ENCODE measurements at regions of chr2 and their contacts with region 1.

Region 1: GRCh38 chr2:199581935-199582360 is 124.2 kb upstream of the SATB2 start:
- DNase-seq: no peak
- ATAC-seq: peak; percentile 74
- H3K4me3 Mint-ChIP-seq: peak overlapping the region; percentile 59
- H3K27ac Mint-ChIP-seq: peak overlapping the region; percentile 38
- H3K4me1 Mint-ChIP-seq: peaks cover 29% of the 10 kb centered on the region
- H3K27me3 Mint-ChIP-seq: no peaks in the 10 kb centered on the region
- CTCF ChIP-seq: no peak

Region 2: GRCh38 chr2:199596549-199596948 is 14.6 kb after region 1 on chr2:
- CTCF ChIA-PET with region 1: interaction called, 22 read pairs
- POLR2A ChIA-PET with region 1: no interaction called
- DNase-seq: peak; percentile 28
- ATAC-seq: peak; percentile 84
- H3K4me3 Mint-ChIP-seq: no peak overlapping the region
- H3K27ac Mint-ChIP-seq: no peak overlapping the region
- H3K4me1 Mint-ChIP-seq: no peaks in the 10 kb centered on the region
- H3K27me3 Mint-ChIP-seq: peaks cover 9% of the 10 kb centered on the region; the same call in 1 of the 2 replicates
- CTCF ChIP-seq: peak; percentile 18; the same call in 1 of the 2 replicates